ENCODE measurements at regions of chrX and their contacts with region 1.

Region 1: GRCh38 chrX:8743126-8743732 is 11.3 kb upstream of the ANOS1 start:
- DNase-seq: peak; percentile 40 to 57
- H3K4me3 ChIP-seq: no peak overlapping the region
- H3K27ac ChIP-seq: no peak overlapping the region
- H3K4me1 ChIP-seq: no peaks in the 10 kb centered on the region
- H3K27me3 ChIP-seq: no peaks in the 10 kb centered on the region
- CTCF ChIP-seq: peak; percentile 86

Region 2: GRCh38 chrX:7996414-7996813 is 746.8 kb before region 1 on chrX:
- CTCF ChIA-PET with region 1: interaction called, 4 read pairs
- POLR2A ChIA-PET with region 1: no interaction called
- intact Hi-C with region 1: loop called (anchors 2 kb)
- DNase-seq: peak in 1 of 2 experiments; percentile 11
- H3K4me3 ChIP-seq: no peak overlapping the region
- H3K27ac ChIP-seq: no peak overlapping the region
- H3K4me1 ChIP-seq: no peaks in the 10 kb centered on the region
- H3K27me3 ChIP-seq: no peaks in the 10 kb centered on the region
- CTCF ChIP-seq: peak; percentile 75

Region 3: DNA sequence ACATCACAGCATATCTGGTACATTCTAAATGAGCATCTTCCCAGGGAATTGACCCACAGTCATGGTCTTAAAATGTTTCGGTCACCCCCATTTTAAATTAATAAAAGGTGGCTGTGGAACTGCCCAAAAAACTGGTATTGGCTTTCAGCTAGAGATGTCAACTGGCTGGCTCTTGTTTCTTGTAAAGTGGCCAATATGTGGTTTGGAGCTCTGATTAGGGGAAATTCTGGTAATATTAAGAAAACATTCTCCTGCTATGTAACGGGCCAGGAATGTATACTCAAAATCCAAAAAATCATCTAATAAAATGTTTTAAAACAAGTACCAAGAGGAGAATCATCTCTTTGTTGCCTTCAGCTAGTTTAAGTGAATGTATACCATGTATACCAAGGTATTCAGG is 510.1 kb before region 1 on chrX:
- CTCF ChIA-PET with region 1: no interaction called
- POLR2A ChIA-PET with region 1: no interaction called
- intact Hi-C with region 1: no loop called
- DNase-seq: no peak
- H3K4me3 ChIP-seq: no peak overlapping the region
- H3K27ac ChIP-seq: no peak overlapping the region
- H3K4me1 ChIP-seq: no peaks in the 10 kb centered on the region
- H3K27me3 ChIP-seq: no peaks in the 10 kb centered on the region
- CTCF ChIP-seq: no peak

Region 4: DNA sequence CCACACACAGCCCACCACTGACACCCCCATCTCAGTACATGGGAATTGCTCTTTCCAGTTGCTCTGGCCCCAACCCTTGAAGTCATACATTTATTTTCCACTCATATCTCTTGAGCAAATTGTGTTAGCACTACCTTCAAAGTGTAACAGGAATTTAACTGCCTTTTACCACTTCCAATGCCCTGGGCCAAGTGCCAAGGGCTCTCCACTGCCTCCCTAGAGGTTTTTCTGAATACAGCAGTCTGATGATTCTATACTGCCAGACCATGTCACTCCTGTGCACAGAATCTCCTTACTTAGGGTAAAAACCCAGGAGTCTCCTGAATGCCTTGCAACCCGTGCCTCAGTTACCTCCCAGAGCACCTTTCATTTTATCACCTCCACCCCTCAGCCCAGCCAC is 169.5 kb before region 1 on chrX:
- CTCF ChIA-PET with region 1: no interaction called
- POLR2A ChIA-PET with region 1: no interaction called
- intact Hi-C with region 1: no loop called
- DNase-seq: peak in 1 of 2 experiments; percentile 0
- H3K4me3 ChIP-seq: no peak overlapping the region
- H3K27ac ChIP-seq: no peak overlapping the region
- H3K4me1 ChIP-seq: no peaks in the 10 kb centered on the region
- H3K27me3 ChIP-seq: no peaks in the 10 kb centered on the region
- CTCF ChIP-seq: no peak

Region 5: GRCh38 chrX:8731559-8732395 is 11.5 kb before region 1 on chrX and contains the start of gene ANOS1:
- CTCF ChIA-PET with region 1: interaction called, 15 read pairs
- POLR2A ChIA-PET with region 1: no interaction called
- intact Hi-C with region 1: no loop called
- DNase-seq: no peak
- H3K4me3 ChIP-seq: no peak within 1 kb of the TSS
- H3K27ac ChIP-seq: no peak within 1 kb of the TSS
- H3K4me1 ChIP-seq: peaks cover 11% of the 10 kb centered on the region
- H3K27me3 ChIP-seq: no peaks in the 10 kb centered on the region
- CTCF ChIP-seq: no peak
- total RNA-seq, gene ANOS1: 0.22 and 0.90 TPM in 2 replicates

Region 6: GRCh38 chrX:8864161-8864560 is 120.9 kb after region 1 on chrX:
- CTCF ChIA-PET with region 1: no interaction called
- POLR2A ChIA-PET with region 1: no interaction called
- intact Hi-C with region 1: no loop called
- DNase-seq: no peak
- H3K4me3 ChIP-seq: no peak overlapping the region
- H3K27ac ChIP-seq: no peak overlapping the region
- H3K4me1 ChIP-seq: peaks cover 22% of the 10 kb centered on the region
- H3K27me3 ChIP-seq: no peaks in the 10 kb centered on the region
- CTCF ChIP-seq: no peak

Region 7: DNA sequence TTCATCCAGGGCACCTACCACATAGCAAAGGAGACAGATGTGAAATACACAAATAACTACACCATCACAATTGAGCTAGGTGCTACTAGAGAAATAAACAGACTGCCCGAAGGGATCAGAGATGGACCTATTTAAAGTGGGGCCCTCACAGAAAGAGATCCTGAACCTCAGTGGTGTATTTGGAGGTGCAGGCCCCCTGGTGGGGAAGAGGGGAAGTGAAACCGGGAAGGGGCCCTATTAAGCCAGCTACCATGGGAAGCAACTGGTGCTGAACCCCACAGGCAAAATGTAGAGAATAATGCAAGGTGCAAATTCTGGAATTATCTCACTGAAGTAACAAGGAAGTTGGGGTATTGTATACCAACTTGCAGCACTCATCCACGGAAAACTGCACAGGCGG is 136.5 kb after region 1 on chrX:
- CTCF ChIA-PET with region 1: no interaction called
- POLR2A ChIA-PET with region 1: no interaction called
- intact Hi-C with region 1: loop called (anchors 10 kb)
- DNase-seq: peak in 1 of 2 experiments; percentile 24
- H3K4me3 ChIP-seq: no peak overlapping the region
- H3K27ac ChIP-seq: no peak overlapping the region
- H3K4me1 ChIP-seq: no peaks in the 10 kb centered on the region
- H3K27me3 ChIP-seq: no peaks in the 10 kb centered on the region
- CTCF ChIP-seq: peak; percentile 56; the same call in 1 of the 2 replicates

Region 8: DNA sequence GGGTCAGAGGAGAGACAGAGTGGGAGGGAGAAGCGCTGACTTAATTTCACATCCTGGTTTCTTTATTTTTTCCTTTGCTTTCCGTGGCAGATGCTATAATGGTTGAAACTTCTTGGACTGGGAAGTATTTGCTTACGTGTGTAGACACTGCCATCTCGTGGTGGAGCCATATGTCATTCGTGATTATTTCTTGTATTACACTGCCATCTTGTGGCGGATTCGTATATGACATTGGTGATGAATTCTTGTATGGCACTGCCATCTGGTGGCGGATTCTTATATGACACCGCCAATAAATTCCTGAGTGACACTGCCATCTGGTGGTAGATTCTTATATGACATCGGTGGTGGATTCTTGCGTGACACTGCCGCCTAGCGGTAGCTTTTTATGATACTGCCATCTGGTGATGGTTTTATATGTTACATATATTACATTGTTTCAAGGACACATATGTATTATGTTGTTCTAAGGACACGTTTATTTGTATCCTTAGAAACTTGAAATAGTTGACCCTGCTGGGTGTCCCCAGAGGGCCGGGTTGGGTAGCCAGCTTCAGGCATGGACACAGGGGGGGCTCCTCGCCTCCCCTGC is 1376.3 kb after region 1 on chrX:
- CTCF ChIA-PET with region 1: no interaction called
- POLR2A ChIA-PET with region 1: no interaction called
- intact Hi-C with region 1: loop called (anchors 10 kb)
- DNase-seq: peak; percentile 45 to 46
- H3K4me3 ChIP-seq: no peak overlapping the region
- H3K27ac ChIP-seq: no peak overlapping the region
- H3K4me1 ChIP-seq: no peaks in the 10 kb centered on the region
- H3K27me3 ChIP-seq: no peaks in the 10 kb centered on the region
- CTCF ChIP-seq: peak; percentile 100